Activated T-helper 1 cell treated with anti-CD3 and anti-CD28 coated beads, Interleukin-12 subunit alpha, Interleukin-12 subunit beta, Interleukin-2, Interleukin-4 antibody, amounts not matched to agents 30 ng/mL and 10 ng/mL and 1 ng/mL, durations not matched to agents 14 hours and 24 hours and 36 hours (primary cell): ENCODE measurements at regions of chr2 and their contacts with region 1.

Region 1: DNA sequence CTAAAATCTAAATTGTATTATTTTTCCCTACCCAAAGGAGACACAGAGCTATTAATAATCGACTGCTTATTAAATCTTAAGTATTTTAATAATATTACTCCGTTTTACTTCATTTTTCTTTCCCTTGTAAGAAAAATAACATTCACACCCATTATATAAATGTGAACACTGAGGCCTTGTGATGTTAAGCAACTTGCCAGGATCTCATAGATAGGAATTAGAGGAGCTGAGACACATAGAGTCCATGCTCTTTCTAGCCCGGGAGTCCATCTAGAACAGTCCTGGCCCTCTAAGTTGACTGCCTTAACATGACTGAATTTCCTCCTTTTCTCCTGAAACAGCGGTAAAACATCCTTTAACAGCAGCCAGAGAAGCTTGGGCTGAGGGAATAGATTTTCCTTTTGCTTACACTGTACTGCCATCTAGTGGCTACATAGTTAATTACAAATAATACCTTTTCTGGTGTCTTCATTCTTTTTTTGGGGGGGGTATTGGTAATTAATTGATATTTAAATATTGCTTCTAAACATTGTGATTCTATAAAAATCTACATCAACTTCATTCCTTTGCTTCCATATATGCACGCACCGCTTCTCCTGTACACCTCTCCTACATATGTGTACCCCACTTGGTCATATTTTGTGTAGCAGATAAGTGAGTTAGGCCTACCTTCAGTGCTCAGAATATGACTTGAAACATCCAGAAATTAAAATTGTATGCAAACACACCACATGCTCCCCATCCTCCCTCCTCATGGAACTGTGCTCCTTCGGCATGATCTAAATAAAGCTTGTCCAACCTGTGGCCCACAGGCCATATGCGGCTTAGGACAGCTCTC is 125.8 kb upstream of the HNMT start:
- DNase-seq: no peak
- H3K4me3 Mint-ChIP-seq: no peak overlapping the region
- H3K27ac Mint-ChIP-seq: no peak overlapping the region
- H3K4me1 Mint-ChIP-seq: no peaks in the 10 kb centered on the region
- H3K27me3 Mint-ChIP-seq: no peaks in the 10 kb centered on the region

Region 2: DNA sequence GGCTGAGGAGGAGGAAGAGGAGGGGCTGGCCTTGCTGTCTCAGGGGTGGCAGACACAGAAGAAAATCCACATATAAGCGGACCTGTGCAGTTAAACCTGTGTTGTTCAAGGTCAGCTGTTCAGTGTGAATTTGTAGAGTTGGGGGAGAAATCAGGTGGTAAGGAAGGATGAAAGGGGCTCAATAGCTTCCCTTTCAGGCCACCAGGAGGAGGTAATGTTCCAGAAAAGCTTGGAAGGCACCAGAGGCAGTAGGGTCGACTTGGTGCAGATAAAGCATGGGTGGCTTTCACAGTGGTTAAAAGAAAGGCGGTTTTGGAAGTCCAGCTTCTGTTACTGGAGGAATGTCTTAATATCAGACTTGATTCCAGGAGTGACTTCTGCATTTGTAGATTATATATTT is 905.8 kb before region 1 on chr2:
- intact Hi-C with region 1: loop called (anchors 5 kb)
- DNase-seq: no peak
- H3K4me3 Mint-ChIP-seq: no peak overlapping the region
- H3K27ac Mint-ChIP-seq: no peak overlapping the region
- H3K4me1 Mint-ChIP-seq: no peaks in the 10 kb centered on the region
- H3K27me3 Mint-ChIP-seq: no peaks in the 10 kb centered on the region

Region 3: GRCh38 chr2:137467246-137467862 is 371.1 kb before region 1 on chr2:
- intact Hi-C with region 1: loop called (anchors 1 kb)
- DNase-seq: no peak
- H3K4me3 Mint-ChIP-seq: no peak overlapping the region
- H3K27ac Mint-ChIP-seq: no peak overlapping the region
- H3K4me1 Mint-ChIP-seq: no peaks in the 10 kb centered on the region
- H3K27me3 Mint-ChIP-seq: no peaks in the 10 kb centered on the region

Region 4: DNA sequence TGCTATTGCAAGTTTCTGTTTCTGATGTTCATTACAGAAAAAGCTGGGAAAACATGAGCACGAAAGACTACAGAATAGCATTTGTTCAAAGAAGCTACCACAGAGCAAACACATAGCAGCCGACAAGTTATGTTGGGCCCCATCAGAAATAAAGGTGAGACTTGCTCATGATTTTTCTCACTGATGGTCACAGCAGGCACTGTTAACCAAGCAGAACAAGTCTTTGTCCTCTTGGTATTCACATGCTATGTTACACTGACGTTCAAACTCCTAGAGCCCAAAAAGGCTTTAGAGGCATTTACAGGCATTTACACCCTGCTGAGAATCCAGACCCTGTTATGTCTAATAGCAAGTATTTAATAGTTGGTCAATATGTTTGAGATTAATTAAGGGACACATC is 109.2 kb before region 1 on chr2:
- intact Hi-C with region 1: no loop called
- DNase-seq: no peak
- H3K4me3 Mint-ChIP-seq: no peak overlapping the region
- H3K27ac Mint-ChIP-seq: no peak overlapping the region
- H3K4me1 Mint-ChIP-seq: no peaks in the 10 kb centered on the region
- H3K27me3 Mint-ChIP-seq: no peaks in the 10 kb centered on the region